Activated naive CD4-positive, alpha-beta T cell treated with anti-CD3 and anti-CD28 coated beads, Interleukin-2, amount 10 ng/mL, durations not matched to agents 7 days and 5 days (primary cell): ENCODE measurements at regions of chr5 and their contacts with region 1.

Region 1: GRCh38 chr5:32092938-32093812 is 80.9 kb downstream of the GOLPH3 start:
- DNase-seq: peak; percentile 73
- H3K4me3 Mint-ChIP-seq: no peak overlapping the region
- H3K27ac Mint-ChIP-seq: no peak overlapping the region
- H3K4me1 Mint-ChIP-seq: no peaks in the 10 kb centered on the region
- H3K27me3 Mint-ChIP-seq: no peaks in the 10 kb centered on the region

Region 2: GRCh38 chr5:31825518-31826068 is 267.6 kb before region 1 on chr5:
- CTCF ChIA-PET with region 1: interaction called, 16 read pairs
- DNase-seq: peak; percentile 55
- H3K4me3 Mint-ChIP-seq: no peak overlapping the region
- H3K27ac Mint-ChIP-seq: no peak overlapping the region
- H3K4me1 Mint-ChIP-seq: peaks cover 3% of the 10 kb centered on the region
- H3K27me3 Mint-ChIP-seq: no peaks in the 10 kb centered on the region

Region 3: DNA sequence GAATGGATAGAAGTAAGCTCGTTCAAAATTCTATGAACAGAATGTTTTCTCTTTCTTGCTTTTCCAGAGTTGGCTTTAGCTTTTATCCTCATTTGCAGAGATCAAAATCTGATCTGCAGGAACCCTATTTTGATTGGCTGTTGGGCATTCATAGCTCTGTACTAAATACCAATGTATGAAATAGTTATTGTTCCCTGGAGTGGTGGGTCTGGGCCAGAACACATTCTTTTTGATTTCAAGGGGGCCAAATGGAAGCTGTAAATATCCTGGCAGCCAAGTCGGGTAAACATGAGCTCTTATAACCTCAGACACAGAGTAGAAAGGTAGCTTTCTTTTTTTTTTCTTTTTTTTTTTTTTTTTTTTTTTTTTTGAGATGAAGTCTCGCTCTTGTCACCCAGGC is 212.7 kb before region 1 on chr5:
- CTCF ChIA-PET with region 1: no interaction called
- DNase-seq: no peak
- H3K4me3 Mint-ChIP-seq: no peak overlapping the region
- H3K27ac Mint-ChIP-seq: no peak overlapping the region
- H3K4me1 Mint-ChIP-seq: no peaks in the 10 kb centered on the region
- H3K27me3 Mint-ChIP-seq: no peaks in the 10 kb centered on the region

Region 4: GRCh38 chr5:31911291-31912265 is 181.6 kb before region 1 on chr5:
- CTCF ChIA-PET with region 1: no interaction called
- DNase-seq: no peak
- H3K4me3 Mint-ChIP-seq: no peak overlapping the region
- H3K27ac Mint-ChIP-seq: no peak overlapping the region
- H3K4me1 Mint-ChIP-seq: no peaks in the 10 kb centered on the region
- H3K27me3 Mint-ChIP-seq: no peaks in the 10 kb centered on the region

Region 5: DNA sequence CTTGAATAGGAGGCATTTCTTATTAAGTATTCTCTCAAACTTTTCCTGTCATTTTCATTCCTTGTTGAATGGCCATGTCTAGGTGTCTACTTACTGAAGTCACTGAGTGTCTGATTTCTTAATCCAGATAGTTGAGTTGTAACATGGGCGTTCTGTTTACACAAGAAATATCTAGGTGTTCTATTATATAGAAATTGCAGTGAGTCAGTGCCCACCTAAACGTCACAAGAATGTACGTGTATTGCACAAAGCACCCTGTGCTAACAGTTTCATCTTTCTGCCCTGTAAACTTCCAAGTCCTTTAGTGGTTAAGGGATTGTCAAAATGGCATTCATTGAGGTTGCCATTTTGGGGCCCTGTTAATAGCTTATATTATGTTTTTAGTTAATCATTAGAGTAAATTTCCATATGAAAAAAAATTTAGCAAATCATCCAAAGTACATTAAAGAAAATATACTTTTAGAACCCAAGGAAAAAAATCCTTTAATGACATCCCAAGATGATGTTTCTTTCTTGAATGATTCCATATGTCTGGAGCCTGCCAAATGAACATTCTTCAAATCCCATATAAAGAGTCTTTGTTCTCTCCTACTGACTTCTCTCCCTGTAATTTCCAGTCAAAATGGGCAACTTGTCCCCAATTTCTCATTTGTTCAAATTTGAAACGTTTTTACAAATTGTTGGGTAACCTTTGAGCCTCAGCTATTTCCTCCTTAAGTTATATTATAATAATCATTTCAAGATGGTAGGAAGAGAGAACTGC is 33.2 kb before region 1 on chr5:
- CTCF ChIA-PET with region 1: no interaction called
- DNase-seq: no peak
- H3K4me3 Mint-ChIP-seq: no peak overlapping the region
- H3K27ac Mint-ChIP-seq: no peak overlapping the region
- H3K4me1 Mint-ChIP-seq: no peaks in the 10 kb centered on the region
- H3K27me3 Mint-ChIP-seq: no peaks in the 10 kb centered on the region